ENCODE measurements at regions of chr20 and their contacts with region 1.

Region 1: DNA sequence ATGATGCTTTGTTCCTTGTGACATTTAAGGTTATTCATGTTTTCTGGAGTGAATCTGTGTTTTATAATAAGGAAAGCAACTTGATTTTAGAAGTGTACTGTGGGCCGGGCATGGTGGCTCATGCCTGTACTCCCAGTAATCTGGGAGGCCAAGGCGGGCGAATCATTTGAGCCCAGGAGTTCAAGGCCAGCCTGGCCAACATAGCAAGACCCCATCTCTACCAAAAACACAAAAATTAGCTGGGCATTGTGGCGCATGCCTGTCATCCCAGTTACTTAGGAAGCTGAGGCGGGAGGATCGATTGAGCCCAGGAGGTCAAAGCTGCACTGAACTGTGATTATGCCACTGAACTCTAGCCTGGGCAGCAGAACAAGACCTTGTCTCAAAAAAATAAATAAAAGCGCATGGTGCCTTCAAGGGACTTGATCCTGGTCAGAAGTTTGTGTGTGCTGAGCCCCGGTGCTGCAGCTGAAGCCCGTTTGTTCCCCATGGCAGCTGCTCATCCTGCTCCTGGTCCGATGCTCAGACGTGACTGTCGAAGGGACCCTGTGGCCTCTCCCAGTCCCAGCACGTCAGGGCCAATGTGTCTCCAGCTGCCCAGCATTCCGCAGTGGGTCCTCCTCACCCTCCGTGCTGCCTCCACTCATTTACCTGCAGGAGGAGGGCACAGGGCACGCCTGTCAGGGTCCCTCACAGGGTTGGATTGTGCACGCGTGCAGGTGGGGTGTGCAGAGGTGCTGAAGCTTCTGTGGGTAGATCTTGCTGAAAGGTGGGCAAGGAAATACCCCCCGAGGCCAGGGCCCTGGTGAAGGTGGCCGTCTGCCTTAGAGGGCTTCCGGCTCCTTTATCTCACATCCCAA is 18.3 kb downstream of the ENTPD6 start:
- DNase-seq: no peak
- H3K4me3 ChIP-seq: no peak overlapping the region
- CTCF ChIP-seq: no peak

Region 2: DNA sequence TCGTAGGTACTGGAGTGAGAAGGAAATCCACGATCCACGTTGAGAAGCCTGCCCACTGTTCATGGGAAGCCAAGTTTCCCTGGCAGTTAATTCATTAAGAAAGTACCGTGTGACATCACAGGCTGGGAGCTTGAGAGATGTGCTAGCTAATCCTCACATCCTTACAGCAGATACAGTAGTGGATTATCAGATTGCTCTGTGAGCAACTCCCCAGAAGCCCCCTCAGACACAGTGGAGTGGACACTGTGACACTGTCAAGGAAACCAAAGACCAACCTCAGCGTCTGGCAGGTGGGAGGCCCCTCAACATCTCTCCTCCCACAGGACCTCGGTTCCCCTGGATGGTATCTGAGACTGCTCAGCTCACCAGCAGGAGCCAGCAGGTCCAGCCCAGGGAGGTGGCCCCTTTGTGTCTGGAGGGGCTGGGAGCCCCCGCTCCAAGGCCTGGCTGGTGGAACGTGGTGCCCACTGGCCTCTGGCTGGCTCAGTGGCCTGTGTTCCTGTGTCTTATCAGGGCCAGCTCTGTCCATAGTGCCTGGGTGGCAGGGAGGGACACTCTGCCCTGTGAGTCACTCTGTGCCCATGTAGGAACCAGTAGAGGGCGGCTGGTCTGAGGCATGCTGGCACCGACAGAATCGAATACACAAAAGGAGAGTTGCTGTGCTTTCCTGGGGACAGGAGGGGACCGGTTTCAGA is 41.3 kb after region 1 on chr20:
- in situ Hi-C with region 1: loop called (anchors 5 kb)
- DNase-seq: no peak
- H3K4me3 ChIP-seq: no peak overlapping the region
- CTCF ChIP-seq: no peak